Activated CD4-positive, alpha-beta T cell treated with anti-CD3 and anti-CD28 coated beads, Interleukin-2, amount 10 ng/mL, durations not matched to agents 24 days and 14 days (primary cell): ENCODE measurements at regions of chr4 and their contacts with region 1.

Region 1: GRCh38 chr4:8403173-8403753 is 37.3 kb downstream of the ACOX3 start:
- DNase-seq: peak; percentile 82
- H3K4me3 Mint-ChIP-seq: no peak overlapping the region
- H3K27ac Mint-ChIP-seq: no peak overlapping the region
- H3K4me1 Mint-ChIP-seq: no peaks in the 10 kb centered on the region
- H3K27me3 Mint-ChIP-seq: no peaks in the 10 kb centered on the region

Region 2: DNA sequence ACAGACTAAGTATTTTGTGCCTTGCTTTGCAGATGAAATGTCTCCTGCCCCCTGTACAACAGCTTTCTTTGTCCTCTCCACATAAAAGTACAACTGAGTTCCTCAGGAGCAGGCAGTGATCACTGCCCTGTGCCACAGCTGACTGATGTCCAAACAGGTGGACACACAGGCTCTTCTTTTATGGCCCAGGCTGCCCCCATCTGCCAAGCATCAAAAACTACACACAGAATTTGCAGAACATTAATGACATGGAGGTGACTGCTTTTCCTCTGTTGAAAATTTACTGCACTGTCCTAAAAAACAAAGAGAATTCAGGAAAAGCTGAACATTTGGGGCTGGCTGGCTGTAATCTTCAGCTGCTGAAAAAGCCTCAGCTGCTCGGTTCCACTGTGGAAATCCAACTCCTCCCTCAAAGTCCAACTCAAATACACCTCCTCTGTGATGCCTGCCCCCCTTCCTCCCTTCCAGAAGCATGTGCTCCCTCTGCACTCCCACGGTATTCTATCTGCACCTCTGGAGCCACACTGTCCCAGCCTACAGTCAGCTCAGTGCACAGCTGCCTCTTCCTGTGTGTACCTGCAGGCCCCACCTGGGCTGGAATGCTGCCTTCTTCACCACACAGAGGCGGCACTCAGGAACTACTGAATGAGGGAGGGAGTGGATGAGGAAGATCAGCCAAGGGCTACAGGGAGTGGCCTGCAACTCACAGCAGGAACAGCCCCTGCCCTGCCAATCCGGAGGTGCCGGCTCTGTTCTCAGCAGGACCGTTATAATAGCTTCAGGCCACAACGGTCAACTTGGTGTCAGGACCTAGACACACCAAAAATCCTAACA is 473.9 kb before region 1 on chr4:
- intact Hi-C with region 1: no loop called
- DNase-seq: no peak
- H3K4me3 Mint-ChIP-seq: no peak overlapping the region
- H3K27ac Mint-ChIP-seq: no peak overlapping the region
- H3K4me1 Mint-ChIP-seq: peaks cover 17% of the 10 kb centered on the region
- H3K27me3 Mint-ChIP-seq: no peaks in the 10 kb centered on the region

Region 3: GRCh38 chr4:7964890-7965662 is 438.2 kb before region 1 on chr4:
- intact Hi-C with region 1: no loop called
- DNase-seq: peak; percentile 74
- H3K4me3 Mint-ChIP-seq: no peak overlapping the region
- H3K27ac Mint-ChIP-seq: peak overlapping the region; percentile 81
- H3K4me1 Mint-ChIP-seq: peaks cover 71% of the 10 kb centered on the region
- H3K27me3 Mint-ChIP-seq: peaks cover 3% of the 10 kb centered on the region

Region 4: DNA sequence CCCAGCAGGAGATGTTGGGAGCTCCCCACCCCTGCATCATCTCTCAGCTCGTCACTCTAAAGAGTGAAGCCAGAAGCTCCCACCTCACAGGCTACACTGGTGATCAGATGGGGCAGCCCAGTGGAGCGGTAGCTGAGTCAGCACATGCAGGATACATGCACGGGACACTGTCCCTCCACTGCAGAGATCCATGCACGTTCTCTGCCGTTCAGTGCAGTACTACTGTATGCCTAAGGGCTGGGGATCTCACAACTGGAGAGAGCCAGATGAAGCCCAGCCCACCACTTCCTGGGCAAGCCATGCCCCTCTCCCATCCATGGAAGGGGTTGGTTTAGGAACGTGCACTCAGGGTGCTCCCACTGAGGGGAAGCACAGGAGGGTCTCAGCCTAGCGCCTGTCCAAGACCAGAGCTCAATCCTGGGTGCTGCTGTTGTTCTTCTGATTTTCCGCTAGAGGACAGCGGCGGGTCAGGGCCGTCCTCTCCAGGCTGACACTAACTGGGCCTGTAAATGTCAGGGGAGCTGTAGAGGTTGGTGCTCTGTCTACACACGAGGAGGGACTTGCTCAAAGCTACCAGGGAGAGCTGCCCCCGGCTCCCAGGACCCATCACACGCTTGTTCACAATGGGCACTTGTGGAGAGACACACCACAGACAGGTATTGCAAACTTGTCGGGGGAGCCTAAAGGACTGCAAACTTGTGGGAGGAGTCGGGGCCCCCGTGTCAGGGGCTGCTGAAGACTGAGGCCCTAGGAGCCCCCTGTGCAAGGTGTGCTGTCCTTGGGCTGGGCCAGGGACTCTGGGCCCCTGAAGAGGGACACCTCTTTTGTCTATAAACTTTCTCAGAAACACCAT is 226.5 kb before region 1 on chr4:
- intact Hi-C with region 1: loop called (anchors 2 kb)
- DNase-seq: peak; percentile 81
- H3K4me3 Mint-ChIP-seq: no peak overlapping the region
- H3K27ac Mint-ChIP-seq: no peak overlapping the region
- H3K4me1 Mint-ChIP-seq: no peaks in the 10 kb centered on the region
- H3K27me3 Mint-ChIP-seq: no peaks in the 10 kb centered on the region

Region 5: DNA sequence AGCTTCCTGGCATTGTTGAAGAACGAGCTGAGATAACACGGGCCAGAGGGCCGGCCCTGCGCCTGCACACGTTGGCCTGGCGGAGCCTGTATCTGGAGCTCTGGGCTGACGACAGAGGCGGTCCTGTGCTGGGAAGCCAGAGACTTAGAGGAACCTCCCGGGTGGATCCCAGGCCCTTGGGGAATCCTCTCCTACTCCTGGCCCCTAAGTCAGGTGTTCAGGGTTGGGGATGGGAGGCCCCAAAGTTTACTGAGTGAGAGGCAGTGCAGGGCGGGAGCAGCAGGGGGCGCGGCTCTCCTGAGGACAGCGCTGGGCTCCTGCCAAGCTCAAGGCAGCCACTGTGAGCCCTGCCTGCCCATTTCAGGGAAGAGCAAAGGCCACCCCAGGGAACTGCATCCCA is 136.2 kb before region 1 on chr4:
- intact Hi-C with region 1: loop called (anchors 2 kb)
- DNase-seq: peak; percentile 73
- H3K4me3 Mint-ChIP-seq: no peak overlapping the region
- H3K27ac Mint-ChIP-seq: no peak overlapping the region
- H3K4me1 Mint-ChIP-seq: no peaks in the 10 kb centered on the region
- H3K27me3 Mint-ChIP-seq: peaks cover 26% of the 10 kb centered on the region